GM12878 (cell line): ENCODE measurements at regions of chr2 and their contacts with region 1.

Region 1: DNA sequence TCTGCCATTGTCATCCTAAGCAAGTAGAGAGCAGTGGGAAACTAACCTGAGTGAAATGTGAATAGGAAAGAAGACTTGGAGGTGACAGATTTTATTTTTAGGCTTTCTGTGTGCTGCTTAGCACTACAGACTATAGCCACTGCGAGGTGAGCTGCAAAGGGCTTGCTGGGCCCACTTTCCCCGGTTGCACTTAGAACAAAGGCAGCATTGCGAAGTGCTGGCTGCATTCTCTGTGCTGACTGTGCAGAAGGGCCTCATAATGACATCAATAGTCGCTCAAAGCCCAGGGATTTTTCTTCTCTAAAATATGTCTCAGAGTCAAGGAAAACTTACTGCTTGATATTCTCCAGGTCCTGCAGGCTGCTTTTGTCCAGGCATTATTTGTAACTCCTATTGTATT is 592.1 kb downstream of the TDRD15 start:
- DNase-seq: no peak
- ATAC-seq: no peak
- H3K4me3 ChIP-seq: no peak overlapping the region
- H3K27ac ChIP-seq: no peak overlapping the region
- H3K4me1 ChIP-seq: no peaks in the 10 kb centered on the region
- H3K27me3 ChIP-seq: no peaks in the 10 kb centered on the region
- CTCF ChIP-seq: no peak
- EP300 ChIP-seq: no peak
- POLR2A ChIP-seq: no peak
- RAD21 ChIP-seq: no peak

Region 2: GRCh38 chr2:21693081-21693480 is 22.8 kb before region 1 on chr2:
- CTCF ChIA-PET with region 1: no interaction called
- POLR2A ChIA-PET with region 1: no interaction called
- RAD21 ChIA-PET with region 1: no interaction called
- SMC1A ChIA-PET with region 1: no interaction called
- in situ Hi-C with region 1: no loop called
- intact Hi-C with region 1: no loop called
- DNase-seq: no peak
- ATAC-seq: no peak
- H3K4me3 ChIP-seq: no peak overlapping the region
- H3K27ac ChIP-seq: no peak overlapping the region
- H3K4me1 ChIP-seq: no peaks in the 10 kb centered on the region
- H3K27me3 ChIP-seq: no peaks in the 10 kb centered on the region
- CTCF ChIP-seq: no peak
- EP300 ChIP-seq: no peak
- POLR2A ChIP-seq: no peak
- RAD21 ChIP-seq: no peak

Region 3: GRCh38 chr2:21740484-21740883 is 24.6 kb after region 1 on chr2:
- CTCF ChIA-PET with region 1: no interaction called
- POLR2A ChIA-PET with region 1: no interaction called
- RAD21 ChIA-PET with region 1: no interaction called
- SMC1A ChIA-PET with region 1: no interaction called
- in situ Hi-C with region 1: no loop called
- intact Hi-C with region 1: loop called (anchors 2 kb)
- DNase-seq: no peak
- ATAC-seq: no peak
- H3K4me3 ChIP-seq: no peak overlapping the region
- H3K27ac ChIP-seq: no peak overlapping the region
- H3K4me1 ChIP-seq: no peaks in the 10 kb centered on the region
- H3K27me3 ChIP-seq: no peaks in the 10 kb centered on the region
- CTCF ChIP-seq: no peak
- EP300 ChIP-seq: no peak
- POLR2A ChIP-seq: no peak
- RAD21 ChIP-seq: no peak